Calu3 (cell line): ENCODE measurements at regions of chr6 and their contacts with region 1.

Region 1: GRCh38 chr6:36678518-36679027 is at the start of gene CDKN1A:
- DNase-seq: peak; percentile 96
- H3K4me3 Mint-ChIP-seq: peak within 1 kb of the TSS; percentile 99
- H3K27ac Mint-ChIP-seq: peak within 1 kb of the TSS; percentile 85
- H3K4me1 Mint-ChIP-seq: peaks cover 65% of the 10 kb centered on the region
- H3K27me3 Mint-ChIP-seq: no peaks in the 10 kb centered on the region
- CTCF ChIP-seq: no peak
- total RNA-seq, gene CDKN1A: 26.5 and 33.7 TPM in 2 replicates

Region 2: DNA sequence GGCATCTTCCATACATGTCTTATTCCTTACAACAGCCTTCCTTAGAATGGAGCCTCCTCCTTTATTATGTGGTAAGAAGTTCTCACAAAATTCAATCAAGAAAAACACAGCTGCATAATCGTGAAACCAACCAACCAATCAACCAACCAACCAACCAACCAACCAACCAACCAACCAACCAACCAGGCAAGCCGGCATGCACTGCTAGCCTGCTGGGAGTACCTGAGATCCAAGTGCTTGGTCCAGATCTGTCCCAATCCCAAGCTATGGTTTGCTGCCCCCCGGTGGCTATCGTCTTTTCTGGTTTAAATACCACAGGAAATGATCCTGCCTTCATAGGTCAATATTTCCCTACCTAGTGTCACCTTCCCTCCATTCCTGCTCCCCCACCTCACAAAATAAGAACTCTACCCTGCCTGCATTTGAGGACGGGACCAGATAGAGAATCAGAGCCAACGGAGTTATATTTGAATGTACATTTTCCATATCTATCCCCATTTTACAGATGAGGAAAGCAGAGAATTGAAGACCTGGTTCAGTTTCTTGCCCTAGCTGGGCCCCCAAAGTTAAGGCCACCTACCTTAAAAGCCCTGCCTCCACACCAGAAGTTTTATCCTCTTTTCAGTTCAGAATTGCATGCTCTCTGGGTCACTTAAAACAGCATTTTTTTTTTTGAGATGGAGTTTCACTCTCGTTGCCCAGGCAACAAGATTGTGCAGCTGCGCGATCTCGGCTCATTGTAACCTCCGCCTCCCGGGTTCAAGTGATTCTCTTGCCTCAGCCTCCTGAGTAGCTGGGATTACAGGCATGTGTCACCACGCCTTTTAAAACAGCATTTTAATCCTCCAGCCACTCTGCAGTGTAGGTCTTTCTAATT is 46.2 kb after region 1 on chr6:
- CTCF ChIA-PET with region 1: interaction called, 3 read pairs
- intact Hi-C with region 1: loop called (anchors 2 kb)
- DNase-seq: peak; percentile 89
- H3K4me3 Mint-ChIP-seq: no peak overlapping the region
- H3K27ac Mint-ChIP-seq: no peak overlapping the region
- H3K4me1 Mint-ChIP-seq: peaks cover 11% of the 10 kb centered on the region
- H3K27me3 Mint-ChIP-seq: no peaks in the 10 kb centered on the region
- CTCF ChIP-seq: peak; percentile 53

Region 3: GRCh38 chr6:36759148-36759759 is 80.7 kb after region 1 on chr6:
- CTCF ChIA-PET with region 1: interaction called, 3 read pairs
- intact Hi-C with region 1: loop called (anchors 2 kb)
- DNase-seq: peak; percentile 94
- H3K4me3 Mint-ChIP-seq: no peak overlapping the region
- H3K27ac Mint-ChIP-seq: no peak overlapping the region
- H3K4me1 Mint-ChIP-seq: peaks cover 49% of the 10 kb centered on the region
- H3K27me3 Mint-ChIP-seq: no peaks in the 10 kb centered on the region
- CTCF ChIP-seq: peak; percentile 94